ENCODE measurements at regions of chr10 and their contacts with region 1.

Region 1: GRCh38 chr10:62681211-62681940 is 123.1 kb upstream of the ADO start:
- DNase-seq: peak; percentile 93
- H3K4me3 Mint-ChIP-seq: no peak overlapping the region
- H3K27ac Mint-ChIP-seq: peak overlapping the region; percentile 72
- H3K4me1 Mint-ChIP-seq: peaks cover 33% of the 10 kb centered on the region
- H3K27me3 Mint-ChIP-seq: no peaks in the 10 kb centered on the region

Region 2: DNA sequence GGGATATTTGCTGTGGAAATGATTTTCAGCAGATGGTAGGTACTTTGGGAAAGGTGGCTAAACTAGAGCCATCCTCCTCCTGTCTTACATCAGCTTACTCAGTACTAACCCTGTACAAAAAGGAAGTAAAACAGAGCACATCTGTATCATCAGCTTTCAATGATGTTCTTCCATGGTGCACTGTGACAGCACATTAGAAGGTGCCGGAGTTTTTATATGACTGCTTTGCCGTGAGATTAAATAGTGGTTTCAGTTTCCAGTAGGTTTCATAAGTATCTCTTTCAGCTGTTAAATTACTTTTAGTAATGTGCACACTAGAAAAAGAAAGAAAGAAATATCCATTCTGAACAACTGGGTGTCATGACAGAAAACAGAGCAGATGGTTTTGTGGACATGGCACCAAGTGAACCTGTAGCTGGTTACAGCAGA is 693.4 kb before region 1 on chr10:
- CTCF ChIA-PET with region 1: no interaction called
- intact Hi-C with region 1: loop called (anchors 1 kb)
- DNase-seq: peak; percentile 64
- H3K4me3 Mint-ChIP-seq: peak overlapping the region; percentile 51
- H3K27ac Mint-ChIP-seq: peak overlapping the region; percentile 96
- H3K4me1 Mint-ChIP-seq: peaks cover 89% of the 10 kb centered on the region
- H3K27me3 Mint-ChIP-seq: no peaks in the 10 kb centered on the region

Region 3: GRCh38 chr10:62528441-62528840 is 152.9 kb before region 1 on chr10:
- CTCF ChIA-PET with region 1: no interaction called
- intact Hi-C with region 1: loop called (anchors 1 kb)
- DNase-seq: no peak
- H3K4me3 Mint-ChIP-seq: peak overlapping the region; percentile 19
- H3K27ac Mint-ChIP-seq: peak overlapping the region; percentile 26
- H3K4me1 Mint-ChIP-seq: peaks cover 37% of the 10 kb centered on the region
- H3K27me3 Mint-ChIP-seq: no peaks in the 10 kb centered on the region

Region 4: DNA sequence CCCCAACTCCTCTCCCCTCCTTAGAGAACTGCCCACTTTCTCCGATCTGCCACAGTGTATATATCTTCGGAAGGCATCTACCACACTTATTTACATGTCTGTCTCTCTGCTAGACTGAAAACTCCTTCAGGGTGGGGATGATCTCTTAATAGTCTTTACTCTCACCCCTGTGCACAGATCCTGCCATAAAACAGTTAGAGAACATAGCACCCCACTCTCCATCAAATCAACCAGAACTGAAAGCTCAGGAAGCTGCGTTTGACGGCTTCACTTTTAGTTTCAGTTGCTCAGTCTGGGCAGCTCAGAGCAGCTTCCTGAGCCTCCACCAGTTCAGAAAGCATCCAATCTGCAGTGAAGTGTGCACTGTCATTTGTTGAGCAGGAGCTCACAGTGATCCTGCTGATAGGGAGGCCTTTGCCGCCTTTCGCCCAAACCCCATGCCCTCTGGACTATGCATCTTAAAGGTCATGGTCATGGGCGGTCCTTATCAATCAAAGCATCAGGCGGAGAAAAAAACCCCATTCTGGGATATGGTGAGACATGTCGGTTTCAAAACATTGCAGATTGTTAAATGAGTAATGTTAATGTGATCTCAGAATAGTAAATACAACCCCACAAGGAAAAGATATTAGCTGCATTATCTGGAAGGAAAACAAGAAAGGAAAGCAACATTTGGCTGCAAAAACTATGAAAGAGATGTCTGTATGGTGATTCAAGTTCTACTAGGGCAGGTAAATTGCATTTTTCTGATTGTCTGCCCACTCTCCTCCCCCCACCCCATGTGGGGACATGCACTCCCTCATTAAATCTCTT is 43.9 kb before region 1 on chr10:
- CTCF ChIA-PET with region 1: interaction called, 8 read pairs
- intact Hi-C with region 1: loop called (anchors 1 kb)
- DNase-seq: peak; percentile 81
- H3K4me3 Mint-ChIP-seq: no peak overlapping the region
- H3K27ac Mint-ChIP-seq: no peak overlapping the region
- H3K4me1 Mint-ChIP-seq: peaks cover 14% of the 10 kb centered on the region
- H3K27me3 Mint-ChIP-seq: no peaks in the 10 kb centered on the region

Region 5: DNA sequence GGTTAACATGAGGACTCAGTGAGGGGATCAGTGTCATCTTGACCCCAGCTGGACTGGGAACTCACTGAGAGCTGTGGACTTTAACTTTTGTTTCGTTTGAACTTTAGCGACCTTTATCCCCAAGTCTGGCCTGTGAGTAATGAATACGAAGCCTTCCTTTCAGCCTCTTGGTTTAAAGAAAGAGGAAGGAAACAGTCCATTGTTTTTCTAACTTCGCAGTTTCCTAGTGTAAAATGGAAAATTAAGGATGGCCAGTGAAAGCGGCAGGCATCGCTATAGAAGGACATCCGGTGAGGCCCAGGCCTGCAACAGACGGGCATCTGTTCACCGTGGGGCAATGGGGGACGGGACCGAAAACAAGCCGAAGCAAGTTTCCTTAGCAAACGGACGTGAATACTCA is 79.0 kb after region 1 on chr10:
- CTCF ChIA-PET with region 1: no interaction called
- intact Hi-C with region 1: no loop called
- DNase-seq: no peak
- H3K4me3 Mint-ChIP-seq: no peak overlapping the region
- H3K27ac Mint-ChIP-seq: no peak overlapping the region
- H3K4me1 Mint-ChIP-seq: peaks cover 24% of the 10 kb centered on the region
- H3K27me3 Mint-ChIP-seq: no peaks in the 10 kb centered on the region

Region 6: DNA sequence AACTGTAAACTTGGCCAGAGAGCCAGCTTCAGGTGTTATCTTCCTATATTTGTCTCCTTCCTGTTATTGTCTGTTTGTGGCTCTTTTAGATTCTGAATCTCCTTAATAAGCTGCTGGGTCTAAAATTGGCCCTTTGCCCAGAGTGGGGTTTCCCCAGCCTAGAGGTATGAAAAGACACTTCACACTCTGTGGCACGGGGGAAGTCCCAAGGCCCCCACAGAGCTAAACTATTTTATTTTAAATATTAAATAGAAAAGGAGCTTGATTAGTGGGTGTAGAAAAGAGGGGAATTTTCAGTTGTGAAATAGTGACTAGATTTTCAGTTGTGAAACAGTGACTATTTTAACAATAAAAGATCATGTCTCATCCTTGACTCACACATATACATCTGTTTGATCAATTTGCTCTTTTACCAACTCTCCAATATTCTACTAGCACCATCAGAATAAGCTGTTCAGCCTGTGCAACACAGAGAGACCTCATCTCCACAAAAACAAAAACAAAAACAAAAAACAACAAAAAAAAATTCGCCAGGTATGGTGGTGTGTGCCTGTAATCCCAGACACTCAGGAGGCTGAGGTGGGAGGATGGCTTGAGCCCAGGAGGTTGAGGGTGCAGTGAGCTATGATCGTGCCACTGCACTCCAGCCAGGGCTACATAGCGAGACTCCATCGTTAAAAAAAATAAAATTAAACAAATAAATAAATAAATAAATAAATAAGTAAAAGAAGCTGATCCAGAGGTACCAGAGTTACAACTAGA is 98.3 kb after region 1 on chr10:
- CTCF ChIA-PET with region 1: interaction called, 7 read pairs
- intact Hi-C with region 1: loop called (anchors 1 kb)
- DNase-seq: peak; percentile 94
- H3K4me3 Mint-ChIP-seq: no peak overlapping the region
- H3K27ac Mint-ChIP-seq: peak overlapping the region; percentile 59
- H3K4me1 Mint-ChIP-seq: peaks cover 21% of the 10 kb centered on the region
- H3K27me3 Mint-ChIP-seq: no peaks in the 10 kb centered on the region

Region 7: DNA sequence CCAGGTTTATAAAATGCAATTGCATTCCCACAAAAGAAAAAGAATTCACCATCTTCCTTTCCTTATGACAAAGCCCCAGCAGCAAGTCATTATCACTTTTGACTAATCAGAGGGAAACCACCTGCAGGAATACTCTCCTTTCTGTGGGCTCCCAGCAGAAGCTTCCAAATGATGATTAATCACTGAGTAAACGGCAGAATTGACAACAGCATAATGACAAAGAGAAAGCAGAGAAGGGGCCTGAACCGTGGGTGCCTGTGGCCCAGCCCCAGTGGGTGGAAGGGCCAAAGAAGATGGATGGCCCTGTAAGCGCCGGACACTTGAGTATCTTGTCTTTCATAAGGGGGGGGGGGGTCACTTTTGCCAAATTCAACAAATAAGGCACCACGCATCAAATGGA is 299.3 kb after region 1 on chr10:
- CTCF ChIA-PET with region 1: no interaction called
- intact Hi-C with region 1: loop called (anchors 2 kb)
- DNase-seq: peak; percentile 52
- H3K4me3 Mint-ChIP-seq: no peak overlapping the region
- H3K27ac Mint-ChIP-seq: peak overlapping the region; percentile 76
- H3K4me1 Mint-ChIP-seq: peaks cover 23% of the 10 kb centered on the region
- H3K27me3 Mint-ChIP-seq: peaks cover 8% of the 10 kb centered on the region

Region 8: GRCh38 chr10:63133056-63133820 is 451.9 kb after region 1 on chr10 and contains the start of gene NRBF2:
- CTCF ChIA-PET with region 1: no interaction called
- intact Hi-C with region 1: loop called (anchors 1 kb)
- DNase-seq: peak; percentile 98
- H3K4me3 Mint-ChIP-seq: peak within 1 kb of the TSS; percentile 89
- H3K27ac Mint-ChIP-seq: peak within 1 kb of the TSS; percentile 92
- H3K4me1 Mint-ChIP-seq: peaks cover 38% of the 10 kb centered on the region
- H3K27me3 Mint-ChIP-seq: no peaks in the 10 kb centered on the region
- total RNA-seq, gene NRBF2: 15.4 to 15.6 TPM

Measured in activated naive CD4-positive, alpha-beta T cell treated with anti-CD3 and anti-CD28 coated beads for 36 hours (primary cell).